RWPE1 (cell line): ENCODE measurements at regions of chr12 and their contacts with region 1.

Region 1: DNA sequence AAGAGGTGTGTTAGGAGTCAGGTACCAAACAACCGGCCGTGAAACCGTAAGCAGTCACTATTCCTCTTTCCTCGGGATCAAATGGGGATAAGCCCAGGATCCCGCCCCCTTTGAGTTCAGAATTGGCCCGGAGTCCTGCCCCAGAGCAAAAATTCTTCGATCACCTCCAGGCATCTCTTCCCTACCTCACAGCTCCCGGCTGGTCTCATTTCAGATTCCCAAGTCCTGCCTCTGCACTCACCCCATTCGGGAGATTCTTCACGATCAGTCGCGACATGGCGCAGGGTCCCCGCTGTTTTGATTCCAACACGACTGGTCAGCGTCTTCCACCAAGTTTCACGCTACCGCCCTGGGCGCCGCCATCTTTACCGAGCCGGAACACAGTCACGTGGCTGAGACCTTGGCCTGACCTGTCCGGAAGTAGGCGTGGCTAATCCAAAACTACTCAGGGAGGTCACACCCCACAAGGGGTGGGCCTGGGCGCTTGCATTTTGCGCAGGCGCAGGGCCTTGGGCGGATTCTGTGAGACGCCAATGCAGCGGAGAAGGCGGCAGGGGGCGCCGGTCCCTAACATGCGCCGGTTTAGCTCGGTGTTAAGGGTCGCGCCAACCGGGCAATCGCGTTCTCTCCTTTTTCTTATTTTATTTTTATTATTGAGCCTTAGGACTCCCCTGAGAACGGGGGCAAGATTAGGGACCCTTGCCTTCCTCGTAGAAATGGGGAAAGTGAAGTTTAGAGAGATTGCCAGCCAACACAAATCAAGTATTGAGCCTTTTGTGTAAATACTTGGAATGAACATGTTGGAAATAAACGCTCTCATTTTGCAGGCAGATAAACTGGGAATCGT is at the start of gene RBM19:
- DNase-seq: peak; percentile 99
- H3K27ac ChIP-seq: peak within 1 kb of the TSS; percentile 62
- CTCF ChIP-seq: peak; percentile 93

Region 2: DNA sequence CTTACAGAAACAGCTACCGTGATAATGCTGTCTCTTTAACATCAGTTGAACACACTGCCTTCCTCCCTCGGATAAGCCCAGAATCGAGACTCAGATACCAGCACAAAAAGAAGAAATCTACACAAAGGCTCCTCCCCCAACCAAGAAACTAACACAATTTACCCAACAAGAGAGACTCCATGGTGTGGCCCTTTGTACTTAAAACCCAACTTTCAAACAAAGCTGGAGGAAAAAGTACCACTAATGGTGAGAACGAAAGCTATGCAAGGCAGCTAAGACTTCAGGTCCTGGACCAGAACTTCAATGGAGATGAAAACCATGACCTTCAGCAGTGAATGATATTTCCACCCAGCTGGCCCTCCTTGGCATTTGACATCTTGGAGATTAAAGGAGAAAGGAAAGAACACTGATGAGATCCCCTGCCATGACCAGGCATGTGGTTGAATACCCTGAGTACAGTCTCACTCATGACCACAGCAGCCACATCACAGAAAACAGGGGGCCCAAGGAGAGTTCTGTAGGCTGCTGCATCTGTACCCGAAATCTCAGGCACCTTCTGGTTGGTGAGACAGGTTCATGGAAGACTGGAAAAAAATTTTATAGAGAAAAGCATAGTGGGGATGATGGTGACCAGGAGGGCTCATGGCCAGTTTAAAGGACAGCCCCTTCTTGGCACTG is 36.7 kb before region 1 on chr12:
- CTCF ChIA-PET with region 1: interaction called, 10 read pairs
- POLR2A ChIA-PET with region 1: no interaction called
- DNase-seq: no peak
- H3K27ac ChIP-seq: no peak overlapping the region
- CTCF ChIP-seq: no peak

Region 3: GRCh38 chr12:113955109-113955970 is 10.8 kb before region 1 on chr12:
- CTCF ChIA-PET with region 1: interaction called, 11 read pairs
- POLR2A ChIA-PET with region 1: no interaction called
- DNase-seq: peak; percentile 39
- H3K27ac ChIP-seq: peak overlapping the region; percentile 42
- CTCF ChIP-seq: peak; percentile 32